ENCODE measurements at regions of chr19 and their contacts with region 1.

Region 1: DNA sequence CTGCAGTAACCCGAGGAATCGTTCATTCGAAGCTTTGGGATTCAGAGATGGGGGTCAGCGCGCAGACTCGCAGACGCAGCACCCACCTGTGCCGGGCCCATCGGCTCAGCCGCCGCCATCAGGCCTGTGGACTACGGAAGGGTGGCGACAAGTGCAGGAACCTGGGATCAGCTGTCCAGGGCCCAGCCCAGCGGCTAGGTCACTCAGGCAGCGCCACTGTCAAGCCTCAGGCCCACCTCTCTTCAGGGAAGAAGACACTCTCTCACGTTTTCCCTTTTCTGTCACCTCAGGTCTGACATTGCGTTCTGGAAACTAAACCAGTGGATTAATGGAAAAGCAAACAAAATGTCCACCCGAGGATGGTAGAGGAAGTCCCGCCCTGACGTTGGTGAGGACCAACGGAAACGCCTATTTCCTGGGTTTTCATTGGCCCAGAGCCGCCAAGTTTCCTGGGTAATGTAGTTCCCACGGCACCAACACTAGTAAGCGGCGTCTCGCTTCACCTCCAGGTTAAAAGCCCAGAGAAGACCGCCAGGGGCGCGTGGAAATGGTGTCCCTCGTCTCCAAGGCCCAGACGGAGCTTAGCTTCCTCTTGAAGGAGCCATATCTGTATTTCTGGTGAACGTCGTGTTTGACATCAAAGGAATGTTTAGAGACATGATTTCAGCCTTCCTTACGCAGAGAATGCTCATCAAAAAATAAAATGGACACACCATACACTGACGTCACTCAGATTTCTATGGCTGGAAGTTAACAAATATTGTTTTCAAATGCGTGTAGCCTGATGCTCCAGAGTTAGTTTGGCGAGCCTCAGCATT is at the start of gene ZNF772:
- DNase-seq: peak; percentile 93
- H3K4me3 Mint-ChIP-seq: peak within 1 kb of the TSS; percentile 83
- H3K27ac Mint-ChIP-seq: peak within 1 kb of the TSS; percentile 82
- H3K4me1 Mint-ChIP-seq: peaks cover 21% of the 10 kb centered on the region
- H3K27me3 Mint-ChIP-seq: no peaks in the 10 kb centered on the region
- total RNA-seq, gene ZNF772: 6.0 to 8.3 TPM

Region 2: GRCh38 chr19:56403764-56404704 is 1073.4 kb before region 1 on chr19 and contains the start of gene ZNF583:
- CTCF ChIA-PET with region 1: no interaction called
- intact Hi-C with region 1: loop called (anchors 5 kb)
- DNase-seq: peak; percentile 88
- H3K4me3 Mint-ChIP-seq: peak within 1 kb of the TSS; percentile 85
- H3K27ac Mint-ChIP-seq: peak within 1 kb of the TSS; percentile 96
- H3K4me1 Mint-ChIP-seq: peaks cover 32% of the 10 kb centered on the region
- H3K27me3 Mint-ChIP-seq: no peaks in the 10 kb centered on the region
- total RNA-seq, gene ZNF583: 0.55 to 1.2 TPM

Region 3: GRCh38 chr19:57435062-57435978 is 42.1 kb before region 1 on chr19 and contains the start of gene ZNF749:
- CTCF ChIA-PET with region 1: no interaction called
- intact Hi-C with region 1: loop called (anchors 1 kb)
- DNase-seq: peak; percentile 98
- H3K4me3 Mint-ChIP-seq: peak within 1 kb of the TSS; percentile 93
- H3K27ac Mint-ChIP-seq: peak within 1 kb of the TSS; percentile 70
- H3K4me1 Mint-ChIP-seq: peaks cover 26% of the 10 kb centered on the region
- H3K27me3 Mint-ChIP-seq: no peaks in the 10 kb centered on the region
- total RNA-seq, gene ZNF749: 8.2 to 9.9 TPM

Region 4: DNA sequence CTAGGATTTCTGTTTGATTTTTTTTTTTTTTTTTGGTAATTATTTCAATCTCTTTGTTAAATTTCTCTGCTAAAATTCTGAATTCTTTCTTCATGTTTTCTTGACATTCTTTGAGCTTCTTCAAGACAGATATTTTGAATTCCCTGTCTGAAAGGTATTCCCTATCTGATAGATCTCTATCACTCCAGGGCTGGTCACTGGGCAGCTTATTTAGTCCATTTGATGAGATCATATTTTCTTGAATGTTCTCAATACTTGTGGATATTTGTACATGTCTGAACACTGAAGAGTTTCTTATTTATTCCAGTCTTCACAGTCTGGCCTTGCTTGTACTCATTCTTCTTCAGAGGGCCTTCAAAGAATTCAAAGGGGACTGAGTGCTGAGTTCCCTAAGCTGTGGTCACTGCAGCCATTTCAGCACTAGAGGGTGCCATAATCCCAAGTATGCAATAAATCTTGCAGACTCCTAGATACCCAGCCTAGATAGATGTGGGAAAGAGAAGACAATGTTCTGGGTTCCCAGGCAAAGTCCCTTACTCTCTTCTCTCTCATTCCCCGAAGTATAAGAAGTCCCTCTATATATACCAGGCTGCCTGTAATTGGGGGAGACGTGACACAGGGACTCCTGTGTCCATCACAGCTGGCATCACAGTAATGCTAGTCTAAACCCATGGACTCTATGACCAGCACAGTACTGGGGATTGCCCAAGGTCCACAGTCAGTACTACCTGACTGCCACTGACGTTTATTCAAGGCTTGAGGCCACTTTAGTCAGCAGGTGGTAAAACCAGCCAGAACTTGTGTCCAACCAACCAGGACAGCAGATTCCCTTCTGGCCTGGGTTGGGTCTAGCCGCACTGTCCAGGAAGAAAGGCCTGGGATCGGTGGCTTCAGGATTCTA is 11.7 kb before region 1 on chr19:
- CTCF ChIA-PET with region 1: no interaction called
- intact Hi-C with region 1: no loop called
- DNase-seq: peak; percentile 30
- H3K4me3 Mint-ChIP-seq: no peak overlapping the region
- H3K27ac Mint-ChIP-seq: no peak overlapping the region
- H3K4me1 Mint-ChIP-seq: no peaks in the 10 kb centered on the region
- H3K27me3 Mint-ChIP-seq: no peaks in the 10 kb centered on the region

Region 5: GRCh38 chr19:57527136-57527881 is 49.9 kb after region 1 on chr19 and contains the start of gene ZNF549:
- CTCF ChIA-PET with region 1: no interaction called
- intact Hi-C with region 1: loop called (anchors 1 kb)
- DNase-seq: peak; percentile 91
- H3K4me3 Mint-ChIP-seq: peak within 1 kb of the TSS; percentile 80
- H3K27ac Mint-ChIP-seq: peak within 1 kb of the TSS; percentile 70
- H3K4me1 Mint-ChIP-seq: peaks cover 14% of the 10 kb centered on the region
- H3K27me3 Mint-ChIP-seq: no peaks in the 10 kb centered on the region
- total RNA-seq, gene ZNF549: 1.8 TPM

Region 6: GRCh38 chr19:57632987-57633831 is 155.8 kb after region 1 on chr19 and contains the start of gene ZNF211:
- CTCF ChIA-PET with region 1: no interaction called
- intact Hi-C with region 1: loop called (anchors 5 kb)
- DNase-seq: peak; percentile 91
- H3K4me3 Mint-ChIP-seq: peak within 1 kb of the TSS; percentile 87
- H3K27ac Mint-ChIP-seq: peak within 1 kb of the TSS; percentile 72
- H3K4me1 Mint-ChIP-seq: peaks cover 18% of the 10 kb centered on the region
- H3K27me3 Mint-ChIP-seq: no peaks in the 10 kb centered on the region
- total RNA-seq, gene ZNF211: 5.2 to 5.7 TPM

Region 7: DNA sequence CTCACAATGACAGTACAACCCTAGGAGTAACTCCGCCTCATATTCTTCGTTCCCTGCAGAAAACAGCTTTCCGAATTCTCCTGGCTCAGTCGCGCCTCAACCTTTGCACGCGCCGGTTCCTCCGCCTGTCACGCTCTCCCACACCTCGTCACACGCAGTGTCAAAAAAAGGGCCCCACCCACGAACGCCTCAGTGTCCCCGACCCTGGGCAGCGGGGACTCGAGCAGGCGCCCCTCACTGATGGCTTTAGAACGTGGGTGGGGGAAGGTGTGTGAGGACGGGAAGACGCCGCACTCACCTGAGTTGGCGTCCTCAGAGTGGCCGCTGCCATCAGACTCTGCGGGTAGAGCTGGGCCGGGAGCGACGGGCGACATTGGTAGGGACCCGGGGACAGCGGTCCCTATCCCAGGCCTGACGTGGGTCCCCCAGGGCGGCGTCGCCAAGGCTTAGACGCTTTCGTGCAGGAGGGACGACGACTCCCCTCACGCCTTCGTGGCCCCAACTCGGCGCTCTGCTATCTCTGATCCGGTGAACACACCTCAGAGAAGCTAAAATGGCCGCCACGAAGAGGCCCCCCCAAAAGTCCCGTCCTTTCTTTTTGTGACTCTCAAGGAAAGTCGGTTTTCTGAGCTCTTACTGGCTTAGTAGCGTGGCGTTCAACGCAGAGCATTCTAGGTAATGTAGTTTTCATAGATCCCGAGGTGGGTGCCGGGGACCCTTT is 231.4 kb after region 1 on chr19 and contains the start of gene ZNF154:
- CTCF ChIA-PET with region 1: no interaction called
- intact Hi-C with region 1: no loop called
- DNase-seq: peak; percentile 21
- H3K4me3 Mint-ChIP-seq: peak within 1 kb of the TSS; percentile 63
- H3K27ac Mint-ChIP-seq: no peak within 1 kb of the TSS
- H3K4me1 Mint-ChIP-seq: peaks cover 4% of the 10 kb centered on the region
- H3K27me3 Mint-ChIP-seq: peaks cover 15% of the 10 kb centered on the region
- total RNA-seq, gene ZNF154: 0.64 to 0.69 TPM

Region 8: GRCh38 chr19:57786291-57786690 is 308.9 kb after region 1 on chr19:
- CTCF ChIA-PET with region 1: no interaction called
- intact Hi-C with region 1: no loop called
- DNase-seq: no peak
- H3K4me3 Mint-ChIP-seq: no peak overlapping the region
- H3K27ac Mint-ChIP-seq: no peak overlapping the region
- H3K4me1 Mint-ChIP-seq: no peaks in the 10 kb centered on the region
- H3K27me3 Mint-ChIP-seq: no peaks in the 10 kb centered on the region

Region 9: GRCh38 chr19:58002384-58003173 is 525.2 kb after region 1 on chr19 and contains the start of gene ZNF606:
- CTCF ChIA-PET with region 1: no interaction called
- intact Hi-C with region 1: loop called (anchors 5 kb)
- DNase-seq: peak; percentile 86
- H3K4me3 Mint-ChIP-seq: peak within 1 kb of the TSS; percentile 81
- H3K27ac Mint-ChIP-seq: peak within 1 kb of the TSS; percentile 79
- H3K4me1 Mint-ChIP-seq: peaks cover 29% of the 10 kb centered on the region
- H3K27me3 Mint-ChIP-seq: no peaks in the 10 kb centered on the region
- total RNA-seq, gene ZNF606: 4.5 to 4.7 TPM

Region 10: DNA sequence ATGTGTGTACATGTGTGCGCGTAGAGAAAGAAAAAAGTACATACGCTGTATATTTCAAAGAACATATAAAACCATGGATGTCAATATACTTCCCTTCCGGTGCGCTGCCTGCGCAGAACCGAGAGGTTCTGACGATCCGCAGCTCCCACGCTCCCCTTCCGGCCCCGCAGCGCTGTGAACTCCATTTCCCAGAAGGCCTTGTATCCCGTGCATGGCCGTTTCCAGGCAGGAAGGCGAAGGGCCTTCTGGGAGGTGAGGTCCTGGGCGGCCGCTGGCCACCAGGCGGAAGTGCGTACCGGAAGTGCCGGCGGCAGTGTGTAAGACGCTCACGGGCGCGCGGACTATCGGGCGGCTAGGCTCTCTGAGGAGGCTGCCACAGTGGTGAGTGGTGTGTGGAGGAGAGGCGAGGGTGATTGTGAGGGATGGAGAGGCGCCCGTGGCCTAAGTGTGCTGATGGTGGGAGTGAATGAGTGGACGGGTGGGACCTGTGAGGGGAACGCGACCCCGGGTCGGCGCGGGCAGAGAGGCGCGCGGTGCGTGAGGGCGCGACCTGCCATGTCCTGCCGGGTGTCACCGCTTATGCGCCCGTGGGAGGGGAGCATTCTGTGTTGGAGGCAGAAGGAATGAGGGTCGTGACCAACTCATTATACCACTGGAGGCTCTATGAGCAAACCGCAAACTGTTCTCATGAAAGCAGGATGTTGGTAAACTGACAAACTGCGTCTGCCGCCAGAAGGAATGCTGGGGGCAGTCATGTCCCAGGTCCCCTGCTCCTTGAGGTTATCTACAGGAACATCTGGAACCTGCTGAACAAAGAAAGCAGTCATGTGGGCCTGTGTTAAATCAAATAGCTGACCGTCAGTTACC is 827.9 kb after region 1 on chr19 and contains the start of gene ERVK3-1:
- CTCF ChIA-PET with region 1: no interaction called
- intact Hi-C with region 1: loop called (anchors 1 kb)
- DNase-seq: peak; percentile 95
- H3K4me3 Mint-ChIP-seq: peak within 1 kb of the TSS; percentile 100
- H3K27ac Mint-ChIP-seq: peak within 1 kb of the TSS; percentile 99
- H3K4me1 Mint-ChIP-seq: peaks cover 46% of the 10 kb centered on the region
- H3K27me3 Mint-ChIP-seq: no peaks in the 10 kb centered on the region
- total RNA-seq, gene ERVK3-1: 24.5 to 27.7 TPM